Pancreas (tissue), 10 donors: ENCODE measurements at regions of chr2 and their contacts with region 1.

Region 1: DNA sequence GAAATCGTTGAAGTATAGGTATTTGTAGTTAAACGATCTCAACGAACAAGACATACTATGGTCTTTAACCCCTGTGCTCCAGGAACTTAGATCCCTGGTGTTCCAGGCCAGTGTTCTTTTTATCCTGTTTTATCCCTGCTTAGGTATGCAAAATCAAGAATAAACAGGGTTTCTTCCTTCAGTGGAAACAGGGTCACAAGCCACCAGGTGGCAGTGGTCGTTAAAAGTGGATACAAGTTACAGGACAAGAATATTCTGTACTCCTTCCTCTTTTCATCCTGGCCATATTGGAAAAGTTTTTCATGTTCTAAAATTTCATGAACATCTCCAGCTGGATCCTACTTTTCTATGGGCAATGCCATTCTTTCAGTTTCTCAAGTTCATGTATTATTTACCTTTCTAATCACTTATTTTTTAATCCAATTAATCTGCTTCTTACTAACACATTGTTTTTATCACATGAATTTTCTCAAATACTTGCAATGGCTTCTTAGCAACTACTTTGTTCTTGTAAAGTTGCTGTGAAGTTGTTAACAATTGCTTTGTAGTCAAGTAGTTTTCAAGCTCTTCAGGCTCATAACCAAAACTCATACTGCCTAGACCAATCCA is 16.4 kb upstream of the HNMT start:
- DNase-seq: peak in 5 of 6 donors; percentile 61 to 82 (median 72)
- ATAC-seq: peak; percentile 76 to 95 (median 92)
- H3K4me3 ChIP-seq: no peak overlapping the region
- H3K27ac ChIP-seq: peak overlapping the region in 1 of 4 donors; percentile 5
- H3K4me1 ChIP-seq: peaks cover 0 to 4% (median 0%) of the 10 kb centered on the region in 3 donors
- H3K27me3 ChIP-seq: no peaks in the 10 kb centered on the region
- CTCF ChIP-seq: peak; percentile 33 to 50 (median 46)

Region 2: GRCh38 chr2:138090330-138090729 is 142.5 kb after region 1 on chr2:
- intact Hi-C with region 1: loop called in 1 of 3 experiments (anchors 10 kb)
- DNase-seq: peak in 1 of 6 donors; percentile 24
- ATAC-seq: peak; percentile 64 to 89 (median 88)
- H3K4me3 ChIP-seq: no peak overlapping the region
- H3K27ac ChIP-seq: no peak overlapping the region
- H3K4me1 ChIP-seq: no peaks in the 10 kb centered on the region
- H3K27me3 ChIP-seq: no peaks in the 10 kb centered on the region
- CTCF ChIP-seq: peak in 3 of 4 donors; percentile 27 to 48 (median 29)